Activated B cell treated with CpG ODN at 0.5 μM for 24 hours (primary cell): ENCODE measurements at regions of chr2 and their contacts with region 1.

Region 1: GRCh38 chr2:66429071-66429477 is 5.9 kb upstream of the MEIS1 start:
- DNase-seq: no peak
- ATAC-seq: no peak
- H3K4me3 Mint-ChIP-seq: no peak overlapping the region
- H3K27ac Mint-ChIP-seq: no peak overlapping the region
- H3K4me1 Mint-ChIP-seq: peaks cover 20% of the 10 kb centered on the region
- H3K27me3 Mint-ChIP-seq: peaks cover 65% of the 10 kb centered on the region
- CTCF ChIP-seq: peak; percentile 29

Region 2: DNA sequence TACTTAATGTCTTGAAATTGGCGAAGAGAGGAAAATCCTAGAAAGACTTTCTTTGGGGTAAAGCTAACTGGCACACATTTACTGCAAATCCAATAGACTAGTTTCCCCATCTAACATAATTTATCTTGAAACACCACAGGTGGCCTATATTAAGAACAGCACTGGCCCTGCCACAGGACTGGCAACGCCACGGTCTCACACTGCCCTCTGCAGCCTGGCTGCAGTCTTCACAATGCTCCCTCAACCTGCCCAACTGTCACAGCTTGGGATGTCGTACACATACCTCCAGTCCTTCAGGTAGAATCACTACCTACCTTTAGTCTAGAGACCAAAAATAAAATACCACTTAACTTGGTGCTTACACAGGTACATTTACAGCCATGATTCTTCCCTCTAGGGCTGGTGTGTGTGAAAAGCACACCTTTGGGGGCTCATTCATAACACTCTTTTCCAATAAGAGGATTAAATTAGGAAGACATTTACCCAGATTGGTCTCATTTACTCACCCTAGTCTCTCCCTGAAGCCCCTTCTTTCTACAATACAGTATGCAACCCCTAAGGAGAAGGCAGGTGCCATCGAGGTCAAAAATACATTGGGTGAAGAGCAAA is 1411.5 kb after region 1 on chr2:
- CTCF ChIA-PET with region 1: no interaction called
- POLR2A ChIA-PET with region 1: no interaction called
- intact Hi-C with region 1: loop called (anchors 1 kb)
- DNase-seq: no peak
- ATAC-seq: peak; percentile 42
- H3K4me3 Mint-ChIP-seq: no peak overlapping the region
- H3K27ac Mint-ChIP-seq: no peak overlapping the region
- H3K4me1 Mint-ChIP-seq: no peaks in the 10 kb centered on the region
- H3K27me3 Mint-ChIP-seq: peaks cover 11% of the 10 kb centered on the region
- CTCF ChIP-seq: no peak

Region 3: DNA sequence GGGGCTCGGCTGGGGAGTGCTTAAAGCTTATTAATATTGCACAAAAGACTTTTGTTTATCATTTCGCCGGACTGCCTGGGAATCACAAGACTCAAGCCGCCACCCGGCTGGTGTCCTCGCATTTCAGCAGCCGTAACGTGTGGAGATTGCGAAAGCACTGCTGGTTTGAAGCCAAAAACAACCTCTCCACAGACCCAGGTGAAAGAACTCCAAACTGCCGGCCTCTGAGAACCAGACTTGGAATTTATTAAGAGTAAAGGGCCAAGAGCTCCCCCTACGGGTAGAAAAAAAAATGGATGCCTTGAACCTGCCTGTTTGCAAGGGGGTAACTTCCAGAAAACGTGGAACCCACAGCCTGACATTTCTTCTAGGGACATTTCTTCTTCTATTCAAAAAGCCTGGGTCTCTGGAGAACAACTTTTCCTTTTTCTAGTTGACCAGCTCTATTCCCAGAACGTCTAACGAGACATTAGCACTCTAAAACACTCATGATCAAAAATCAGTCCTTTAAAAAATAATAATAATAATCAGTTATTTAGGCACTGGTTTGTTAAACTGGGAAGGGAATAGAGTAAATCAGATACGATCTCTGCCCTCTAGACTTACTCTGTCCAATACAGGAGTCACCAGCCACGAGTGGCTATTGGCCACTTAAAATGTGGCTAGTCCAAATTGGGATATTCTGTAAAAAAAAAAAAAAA is 1417.4 kb after region 1 on chr2:
- CTCF ChIA-PET with region 1: interaction called, 3 read pairs
- POLR2A ChIA-PET with region 1: no interaction called
- intact Hi-C with region 1: loop called (anchors 1 kb)
- DNase-seq: no peak
- ATAC-seq: no peak
- H3K4me3 Mint-ChIP-seq: no peak overlapping the region
- H3K27ac Mint-ChIP-seq: no peak overlapping the region
- H3K4me1 Mint-ChIP-seq: no peaks in the 10 kb centered on the region
- H3K27me3 Mint-ChIP-seq: peaks cover 34% of the 10 kb centered on the region
- CTCF ChIP-seq: peak; percentile 30